Endothelial cell of umbilical vein (primary cell): ENCODE measurements at regions of chr22 and their contacts with region 1.

Region 1: DNA sequence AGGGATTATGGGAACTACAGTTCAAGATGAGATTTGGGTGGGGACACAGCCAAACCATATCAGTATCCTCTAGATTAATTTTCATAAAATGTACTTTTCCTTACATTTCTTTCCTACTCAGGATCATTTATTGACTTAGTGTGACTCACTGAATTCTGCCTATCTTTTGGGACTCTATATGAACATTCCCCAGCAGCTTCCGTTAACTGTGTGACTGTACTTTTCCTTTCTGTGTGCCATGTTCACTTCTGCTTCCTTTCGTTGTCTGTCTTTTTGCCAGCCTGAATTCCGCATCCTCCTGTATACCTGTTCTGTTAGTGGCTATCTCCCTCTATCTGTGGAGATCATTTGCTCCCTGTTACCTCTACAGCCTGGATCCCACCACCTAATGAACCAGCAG is 48.8 kb downstream of the SPECC1L start:
- DNase-seq: peak; percentile 89
- H3K4me3 ChIP-seq: peak overlapping the region in 1 of 3 experiments; percentile 39
- H3K27ac ChIP-seq: peak overlapping the region; percentile 88
- H3K4me1 ChIP-seq: peaks cover 44% of the 10 kb centered on the region
- H3K27me3 ChIP-seq: no peaks in the 10 kb centered on the region
- CTCF ChIP-seq: no peak
- POLR2A ChIP-seq: peak; percentile 26

Region 2: DNA sequence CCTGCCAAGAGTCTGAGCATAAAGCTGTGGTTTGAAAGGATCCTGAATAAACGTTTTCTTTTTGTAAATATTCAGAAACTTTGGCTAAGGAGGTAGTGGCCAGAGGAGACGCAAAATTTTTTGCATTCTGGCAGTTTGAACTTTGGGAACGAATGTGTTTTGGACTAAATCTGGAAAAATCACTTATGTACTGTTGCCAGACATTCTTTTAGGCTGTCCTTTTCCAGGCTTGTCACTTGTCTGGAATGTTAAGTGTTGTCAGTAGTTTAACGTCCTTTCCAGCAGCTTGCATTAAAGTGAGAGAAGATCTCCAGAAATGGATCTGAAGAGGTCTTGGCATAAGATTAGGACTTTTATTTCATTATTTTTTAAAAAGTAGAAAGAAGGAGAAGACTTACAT is 30.3 kb before region 1 on chr22:
- CTCF ChIA-PET with region 1: interaction called, 4 read pairs
- POLR2A ChIA-PET with region 1: no interaction called
- dilution Hi-C with region 1: no loop called
- intact Hi-C with region 1: loop called (anchors 2 kb)
- DNase-seq: peak; percentile 55
- H3K4me3 ChIP-seq: no peak overlapping the region
- H3K27ac ChIP-seq: peak overlapping the region; percentile 67
- H3K4me1 ChIP-seq: peaks cover 30% of the 10 kb centered on the region
- H3K27me3 ChIP-seq: no peaks in the 10 kb centered on the region
- CTCF ChIP-seq: no peak
- POLR2A ChIP-seq: no peak

Region 3: DNA sequence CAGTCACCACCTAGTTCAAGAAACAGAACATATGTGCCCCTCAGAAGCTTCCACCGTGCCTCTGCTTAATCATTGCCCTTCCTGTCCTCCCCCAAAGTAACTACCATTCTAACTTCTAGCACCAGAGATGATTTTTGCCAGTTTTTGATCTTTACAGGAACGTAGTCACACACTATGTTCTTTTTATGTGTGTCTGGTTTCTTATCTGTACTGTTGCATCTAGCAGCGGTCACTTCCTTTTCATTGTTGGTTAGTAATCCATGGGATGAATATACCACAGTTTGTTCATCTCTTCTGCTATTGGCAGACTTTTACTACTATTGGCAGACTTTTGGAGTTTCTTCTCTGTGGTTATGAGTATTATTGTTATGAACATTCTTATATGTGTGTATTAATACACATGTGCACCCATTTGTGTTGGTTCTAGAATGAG is 14.2 kb before region 1 on chr22:
- CTCF ChIA-PET with region 1: interaction called, 3 read pairs
- POLR2A ChIA-PET with region 1: no interaction called
- dilution Hi-C with region 1: no loop called
- intact Hi-C with region 1: loop called (anchors 1 kb)
- DNase-seq: peak; percentile 89
- H3K4me3 ChIP-seq: peak overlapping the region in 1 of 3 experiments; percentile 28
- H3K27ac ChIP-seq: peak overlapping the region; percentile 89
- H3K4me1 ChIP-seq: peaks cover 39% of the 10 kb centered on the region
- H3K27me3 ChIP-seq: no peaks in the 10 kb centered on the region
- CTCF ChIP-seq: no peak
- POLR2A ChIP-seq: peak; percentile 44

Region 4: GRCh38 chr22:24367841-24368240 is 48.4 kb after region 1 on chr22:
- CTCF ChIA-PET with region 1: no interaction called
- POLR2A ChIA-PET with region 1: no interaction called
- dilution Hi-C with region 1: no loop called
- intact Hi-C with region 1: no loop called
- DNase-seq: no peak
- H3K4me3 ChIP-seq: no peak overlapping the region
- H3K27ac ChIP-seq: no peak overlapping the region
- H3K4me1 ChIP-seq: peaks cover 6% of the 10 kb centered on the region
- H3K27me3 ChIP-seq: no peaks in the 10 kb centered on the region
- CTCF ChIP-seq: no peak
- POLR2A ChIP-seq: no peak

Region 5: DNA sequence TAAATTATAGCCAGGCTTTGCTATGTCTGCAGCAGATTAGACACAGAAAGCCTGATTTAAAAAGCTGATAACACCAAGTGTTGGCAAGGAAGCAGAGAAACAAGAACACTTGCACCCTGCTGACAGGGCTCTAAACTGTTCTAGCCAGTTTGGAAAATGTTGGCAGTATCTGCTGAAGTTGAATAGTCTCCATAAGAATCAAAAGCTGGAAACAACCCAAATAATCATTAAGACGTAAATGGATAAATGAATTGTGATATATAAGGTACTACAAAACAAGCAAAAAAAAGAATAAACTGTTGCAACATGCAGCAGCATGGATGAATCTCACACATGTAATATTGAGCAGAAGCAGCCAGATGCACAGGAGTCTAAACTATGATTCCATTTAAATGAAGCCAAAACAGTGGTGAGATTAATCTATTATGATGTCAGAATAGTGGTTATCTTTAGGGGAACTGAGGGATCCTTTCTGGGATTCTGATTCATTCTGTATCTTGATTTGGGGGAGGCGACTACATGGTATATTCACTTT is 67.6 kb after region 1 on chr22:
- CTCF ChIA-PET with region 1: no interaction called
- POLR2A ChIA-PET with region 1: no interaction called
- dilution Hi-C with region 1: no loop called
- intact Hi-C with region 1: no loop called
- DNase-seq: no peak
- H3K4me3 ChIP-seq: no peak overlapping the region
- H3K27ac ChIP-seq: no peak overlapping the region
- H3K4me1 ChIP-seq: peaks cover 29% of the 10 kb centered on the region
- H3K27me3 ChIP-seq: no peaks in the 10 kb centered on the region
- CTCF ChIP-seq: no peak
- POLR2A ChIP-seq: no peak